Activated CD4-positive, alpha-beta T cell treated with anti-CD3 and anti-CD28 coated beads for 36 hours (primary cell): ENCODE measurements at regions of chr4 and their contacts with region 1.

Region 1: DNA sequence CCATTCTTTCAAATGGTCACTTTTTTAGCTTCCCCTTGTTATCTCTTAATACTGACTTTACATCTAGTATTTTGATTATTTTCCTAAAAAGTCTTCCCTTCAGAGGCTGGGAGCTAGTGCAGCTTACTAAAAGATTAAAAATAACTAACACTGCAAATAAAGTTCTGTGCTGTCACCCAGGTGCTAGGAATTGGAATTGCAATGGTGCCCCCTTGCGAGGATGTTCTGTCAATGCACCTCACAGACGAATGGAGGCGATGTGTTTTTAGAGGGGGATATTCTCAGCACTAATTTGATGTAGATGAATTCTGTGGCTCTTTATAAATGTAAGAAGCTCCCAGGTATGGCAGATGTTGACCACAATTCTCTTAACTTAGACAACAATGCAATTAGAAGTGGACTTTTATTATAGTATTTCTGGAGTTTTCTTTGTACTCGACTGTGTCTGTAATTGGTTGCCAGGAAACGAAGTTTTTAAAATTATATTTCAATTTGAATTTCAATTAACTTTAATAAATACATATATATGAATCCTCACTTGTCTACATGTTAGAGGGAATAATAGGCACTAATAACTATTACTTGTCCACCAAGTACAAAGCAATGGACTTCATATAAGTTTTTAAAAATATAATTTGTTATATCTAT is 22.0 kb upstream of the SMIM31 start:
- DNase-seq: peak; percentile 68
- ATAC-seq: no peak
- H3K4me3 Mint-ChIP-seq: no peak overlapping the region
- H3K27ac Mint-ChIP-seq: no peak overlapping the region
- H3K4me1 Mint-ChIP-seq: no peaks in the 10 kb centered on the region
- H3K27me3 Mint-ChIP-seq: peaks cover 13% of the 10 kb centered on the region

Region 2: GRCh38 chr4:163484906-163485305 is 1247.0 kb before region 1 on chr4:
- CTCF ChIA-PET with region 1: no interaction called
- POLR2A ChIA-PET with region 1: no interaction called
- intact Hi-C with region 1: loop called in 1 of 2 experiments (anchors 5 kb)
- DNase-seq: peak; percentile 73
- ATAC-seq: peak; percentile 55
- H3K4me3 Mint-ChIP-seq: no peak overlapping the region
- H3K27ac Mint-ChIP-seq: no peak overlapping the region
- H3K4me1 Mint-ChIP-seq: no peaks in the 10 kb centered on the region
- H3K27me3 Mint-ChIP-seq: peaks cover 4% of the 10 kb centered on the region

Region 3: DNA sequence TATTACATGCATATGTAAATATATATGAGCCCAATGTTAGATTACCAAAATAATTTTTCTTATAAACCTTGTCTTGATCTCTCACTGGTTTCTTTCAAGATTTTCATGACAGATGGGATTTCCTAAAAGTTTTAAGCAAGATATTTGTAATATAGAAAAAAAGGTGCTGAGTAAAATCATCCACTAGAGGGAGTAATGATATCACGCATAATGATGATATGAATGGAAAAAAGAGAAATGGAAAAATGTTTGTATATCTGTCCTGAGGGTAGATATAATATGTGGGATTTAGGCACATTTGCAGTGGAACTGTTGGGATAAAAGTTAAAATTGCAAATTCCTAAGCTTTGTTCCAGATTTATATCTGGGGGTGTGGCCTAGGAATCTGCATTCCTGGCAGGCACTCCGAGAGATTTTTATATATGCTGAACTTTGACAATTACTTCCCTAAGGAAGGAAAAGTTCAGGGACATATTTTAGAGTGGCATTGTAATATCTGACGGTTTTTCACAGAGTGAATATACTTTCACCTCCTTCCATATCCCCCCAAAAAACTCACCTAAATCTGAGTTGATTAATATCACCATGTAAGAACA is 1177.0 kb before region 1 on chr4:
- CTCF ChIA-PET with region 1: interaction called, 12 read pairs
- POLR2A ChIA-PET with region 1: no interaction called
- intact Hi-C with region 1: loop called (anchors 1 to 2 kb)
- DNase-seq: no peak
- ATAC-seq: no peak
- H3K4me3 Mint-ChIP-seq: no peak overlapping the region
- H3K27ac Mint-ChIP-seq: no peak overlapping the region
- H3K4me1 Mint-ChIP-seq: peaks cover 34% of the 10 kb centered on the region
- H3K27me3 Mint-ChIP-seq: no peaks in the 10 kb centered on the region

Region 4: GRCh38 chr4:163755013-163755412 is 976.9 kb before region 1 on chr4:
- CTCF ChIA-PET with region 1: no interaction called
- POLR2A ChIA-PET with region 1: no interaction called
- intact Hi-C with region 1: loop called in 1 of 2 experiments (anchors 10 kb)
- DNase-seq: no peak
- ATAC-seq: peak; percentile 42
- H3K4me3 Mint-ChIP-seq: no peak overlapping the region
- H3K27ac Mint-ChIP-seq: no peak overlapping the region
- H3K4me1 Mint-ChIP-seq: peaks cover 2% of the 10 kb centered on the region
- H3K27me3 Mint-ChIP-seq: peaks cover under 1% of the 10 kb centered on the region

Region 5: GRCh38 chr4:164337219-164337944 is 394.6 kb before region 1 on chr4:
- CTCF ChIA-PET with region 1: no interaction called
- POLR2A ChIA-PET with region 1: no interaction called
- intact Hi-C with region 1: no loop called
- DNase-seq: no peak
- ATAC-seq: no peak
- H3K4me3 Mint-ChIP-seq: no peak overlapping the region
- H3K27ac Mint-ChIP-seq: no peak overlapping the region
- H3K4me1 Mint-ChIP-seq: no peaks in the 10 kb centered on the region
- H3K27me3 Mint-ChIP-seq: peaks cover 4% of the 10 kb centered on the region

Region 6: GRCh38 chr4:164716901-164717300 is 15.1 kb before region 1 on chr4:
- CTCF ChIA-PET with region 1: interaction called, 13 read pairs
- POLR2A ChIA-PET with region 1: no interaction called
- intact Hi-C with region 1: no loop called
- DNase-seq: no peak
- ATAC-seq: no peak
- H3K4me3 Mint-ChIP-seq: no peak overlapping the region
- H3K27ac Mint-ChIP-seq: no peak overlapping the region
- H3K4me1 Mint-ChIP-seq: no peaks in the 10 kb centered on the region
- H3K27me3 Mint-ChIP-seq: peaks cover 4% of the 10 kb centered on the region

Region 7: DNA sequence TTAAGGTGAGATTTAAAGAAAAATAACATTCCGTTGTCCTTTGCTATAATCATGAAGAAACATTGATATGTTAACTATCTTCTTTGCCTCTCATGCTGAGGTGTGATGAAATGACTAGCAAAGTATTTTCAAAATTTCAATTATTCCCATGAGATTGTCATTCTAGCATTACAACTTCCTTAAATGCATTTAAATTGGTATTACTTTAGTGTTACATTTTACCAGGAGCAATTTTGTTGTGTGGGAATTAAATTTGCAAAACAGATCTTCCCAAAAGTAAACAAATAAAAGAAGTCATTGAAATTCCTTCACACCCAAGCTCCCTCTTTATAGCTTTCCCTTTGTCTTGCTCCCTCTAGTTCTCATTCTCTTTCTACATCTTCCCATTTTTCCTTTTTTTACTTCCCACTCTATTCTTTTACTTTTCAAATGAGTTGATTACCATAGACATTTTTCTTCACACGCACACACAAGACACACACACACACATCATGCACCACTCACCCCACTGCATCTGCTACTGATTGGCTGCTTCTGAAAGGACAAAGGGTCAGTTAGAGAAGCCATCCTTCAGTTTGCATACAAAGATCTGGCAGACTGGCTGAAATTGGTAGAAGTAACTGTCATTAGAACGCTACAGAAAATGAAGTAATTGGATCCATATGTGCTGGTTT is 135.0 kb after region 1 on chr4:
- CTCF ChIA-PET with region 1: no interaction called
- POLR2A ChIA-PET with region 1: no interaction called
- intact Hi-C with region 1: no loop called
- DNase-seq: no peak
- ATAC-seq: no peak
- H3K4me3 Mint-ChIP-seq: no peak overlapping the region
- H3K27ac Mint-ChIP-seq: no peak overlapping the region
- H3K4me1 Mint-ChIP-seq: no peaks in the 10 kb centered on the region
- H3K27me3 Mint-ChIP-seq: no peaks in the 10 kb centered on the region